IMR-90 (cell line): ENCODE measurements at regions of chr5 and their contacts with region 1.

Region 1: DNA sequence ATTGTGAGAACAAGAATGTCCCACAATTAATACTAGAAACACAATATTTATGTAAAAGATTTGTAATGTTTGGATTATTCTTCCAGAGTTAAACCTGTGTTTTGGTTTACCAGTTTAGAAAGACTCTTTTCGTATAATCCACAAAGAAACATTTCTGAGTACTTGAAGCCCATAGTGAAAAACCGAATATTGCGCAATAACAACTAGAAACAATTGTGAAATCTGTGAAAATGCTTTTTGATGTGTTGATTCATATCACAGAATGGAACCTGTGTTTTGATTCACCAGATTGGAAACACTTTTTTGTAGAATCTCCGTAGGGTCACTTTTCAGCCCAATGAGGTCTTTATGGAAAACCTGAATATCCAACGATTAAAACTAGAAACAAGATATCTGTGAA is 386.2 kb downstream of the PRDM9 start:
- DNase-seq: no peak
- ATAC-seq: no peak
- H3K4me3 ChIP-seq: no peak overlapping the region
- H3K27ac ChIP-seq: no peak overlapping the region
- H3K4me1 ChIP-seq: no peaks in the 10 kb centered on the region
- H3K27me3 ChIP-seq: no peaks in the 10 kb centered on the region
- CTCF ChIP-seq: no peak
- POLR2A ChIP-seq: no peak
- RAD21 ChIP-seq: no peak

Region 2: DNA sequence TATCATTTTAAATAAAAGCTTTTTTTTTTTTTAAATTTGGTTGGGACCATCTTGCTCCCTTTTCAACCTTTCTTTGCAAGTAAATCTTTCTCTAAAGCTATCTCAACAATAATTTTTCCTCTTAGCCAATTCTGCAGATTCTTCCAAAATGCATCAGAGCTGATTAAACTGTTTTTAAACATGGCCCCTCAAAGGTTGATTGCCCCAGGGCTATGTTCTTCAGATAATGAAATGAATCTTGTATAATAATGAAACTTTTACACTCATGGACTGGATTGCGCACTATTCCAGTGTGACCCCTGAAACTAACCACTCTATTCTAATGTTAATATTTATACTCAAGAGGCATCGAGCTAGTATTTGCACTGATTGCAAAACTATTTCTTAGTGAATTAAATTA is 608.9 kb before region 1 on chr5:
- CTCF ChIA-PET with region 1: no interaction called
- POLR2A ChIA-PET with region 1: no interaction called
- dilution Hi-C with region 1: no loop called
- in situ Hi-C with region 1: no loop called
- intact Hi-C with region 1: no loop called
- DNase-seq: no peak
- ATAC-seq: no peak
- H3K4me3 ChIP-seq: no peak overlapping the region
- H3K27ac ChIP-seq: no peak overlapping the region
- H3K4me1 ChIP-seq: no peaks in the 10 kb centered on the region
- H3K27me3 ChIP-seq: no peaks in the 10 kb centered on the region
- CTCF ChIP-seq: no peak
- POLR2A ChIP-seq: no peak
- RAD21 ChIP-seq: no peak

Region 3: GRCh38 chr5:23864786-23865185 is 28.8 kb before region 1 on chr5:
- CTCF ChIA-PET with region 1: no interaction called
- POLR2A ChIA-PET with region 1: no interaction called
- dilution Hi-C with region 1: no loop called
- in situ Hi-C with region 1: no loop called
- intact Hi-C with region 1: loop called (anchors 1 kb)
- DNase-seq: no peak
- ATAC-seq: no peak
- H3K4me3 ChIP-seq: no peak overlapping the region
- H3K27ac ChIP-seq: no peak overlapping the region
- H3K4me1 ChIP-seq: no peaks in the 10 kb centered on the region
- H3K27me3 ChIP-seq: no peaks in the 10 kb centered on the region
- CTCF ChIP-seq: no peak
- POLR2A ChIP-seq: no peak
- RAD21 ChIP-seq: no peak